CD4-positive, alpha-beta T cell (primary cell): ENCODE measurements at regions of chr3 and their contacts with region 1.

Region 1: GRCh38 chr3:50617096-50617791 is at the start of gene MAPKAPK3:
- DNase-seq: peak in 5 of 14 experiments; percentile 32 to 50 (median 43)
- ATAC-seq: peak; percentile 4
- H3K4me3 ChIP-seq: peak within 1 kb of the TSS; percentile 93
- H3K4me3 Mint-ChIP-seq: peak within 1 kb of the TSS; percentile 92
- H3K27ac ChIP-seq: peak within 1 kb of the TSS; percentile 73 to 79
- H3K27ac Mint-ChIP-seq: peak within 1 kb of the TSS; percentile 84
- H3K4me1 ChIP-seq: peaks cover 87% of the 10 kb centered on the region
- H3K4me1 Mint-ChIP-seq: peaks cover 64% of the 10 kb centered on the region
- H3K27me3 ChIP-seq: no peaks in the 10 kb centered on the region
- H3K27me3 Mint-ChIP-seq: no peaks in the 10 kb centered on the region
- CTCF ChIP-seq: no peak
- total RNA-seq, gene MAPKAPK3: 16.4 to 16.6 TPM

Region 2: GRCh38 chr3:49867400-49867799 is 749.8 kb before region 1 on chr3:
- CTCF ChIA-PET with region 1: no interaction called
- POLR2A ChIA-PET with region 1: no interaction called
- intact Hi-C with region 1: no loop called
- DNase-seq: no peak
- ATAC-seq: no peak
- H3K4me3 ChIP-seq: no peak overlapping the region
- H3K4me3 Mint-ChIP-seq: no peak overlapping the region
- H3K27ac ChIP-seq: no peak overlapping the region
- H3K27ac Mint-ChIP-seq: no peak overlapping the region
- H3K4me1 ChIP-seq: peaks cover 16% of the 10 kb centered on the region
- H3K4me1 Mint-ChIP-seq: no peaks in the 10 kb centered on the region
- H3K27me3 ChIP-seq: peaks cover 45 to 46% of the 10 kb centered on the region in 2 experiments
- H3K27me3 Mint-ChIP-seq: peaks cover 57% of the 10 kb centered on the region
- CTCF ChIP-seq: no peak

Region 3: DNA sequence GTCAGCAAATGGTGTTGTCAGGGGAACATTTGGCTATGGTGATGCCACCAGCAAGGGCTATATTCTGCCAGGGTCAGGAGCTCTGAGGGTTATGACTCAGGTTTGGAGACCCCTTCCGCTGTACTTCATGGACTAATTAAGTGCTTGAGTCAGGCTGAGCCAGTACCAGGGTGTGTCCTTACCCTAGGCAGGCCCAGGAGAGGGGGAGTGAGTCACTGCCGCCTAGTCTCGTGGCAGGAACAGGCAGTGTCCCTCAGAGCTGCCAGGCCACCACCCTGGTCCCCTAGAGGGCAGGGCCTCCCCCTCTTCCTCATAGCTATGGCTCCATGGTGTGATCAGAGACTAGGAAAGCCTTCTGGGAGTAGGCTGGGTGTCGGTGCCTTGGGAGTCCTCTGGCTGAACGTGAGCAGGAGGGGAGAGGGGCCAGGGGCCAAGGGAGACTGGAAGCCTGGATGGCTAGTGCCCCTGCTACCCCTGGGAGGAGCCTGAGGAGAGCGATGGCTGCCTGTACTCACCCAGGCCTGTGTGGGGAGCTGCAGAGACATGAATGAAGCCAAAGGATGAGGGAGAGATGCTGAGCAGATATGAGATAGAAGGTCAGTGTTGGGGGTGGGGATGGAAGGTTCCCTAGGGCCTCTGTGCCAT is 10.3 kb after region 1 on chr3:
- CTCF ChIA-PET with region 1: interaction called, 10 read pairs
- POLR2A ChIA-PET with region 1: interaction called, 10 read pairs
- intact Hi-C with region 1: no loop called
- DNase-seq: peak in 2 of 14 experiments; percentile 64 to 78
- ATAC-seq: peak; percentile 13
- H3K4me3 ChIP-seq: no peak overlapping the region
- H3K4me3 Mint-ChIP-seq: no peak overlapping the region
- H3K27ac ChIP-seq: no peak overlapping the region
- H3K27ac Mint-ChIP-seq: peak overlapping the region; percentile 70
- H3K4me1 ChIP-seq: peaks cover 99% of the 10 kb centered on the region
- H3K4me1 Mint-ChIP-seq: peaks cover 89% of the 10 kb centered on the region
- H3K27me3 ChIP-seq: no peaks in the 10 kb centered on the region
- H3K27me3 Mint-ChIP-seq: no peaks in the 10 kb centered on the region
- CTCF ChIP-seq: no peak

Region 4: DNA sequence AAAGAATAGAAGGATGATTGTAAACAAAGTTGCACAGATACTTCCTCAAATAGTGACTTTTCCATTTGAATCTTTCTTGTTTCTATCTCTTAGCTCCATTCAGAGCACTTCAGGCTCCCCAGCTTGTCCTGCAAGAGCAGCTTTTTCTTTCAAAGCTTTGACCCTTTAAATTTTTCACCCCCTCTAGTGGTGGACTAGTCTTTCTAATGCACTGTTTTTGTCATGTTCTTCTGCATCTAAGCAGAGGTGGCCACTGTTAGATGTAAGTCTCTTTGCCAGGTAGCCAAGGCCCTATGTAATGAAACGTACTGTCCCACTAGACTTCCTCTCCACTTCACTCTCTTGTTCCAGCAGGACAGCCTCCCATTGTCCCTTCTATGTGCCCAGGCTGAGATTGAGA is 693.8 kb after region 1 on chr3:
- CTCF ChIA-PET with region 1: interaction called, 8 read pairs
- POLR2A ChIA-PET with region 1: no interaction called
- intact Hi-C with region 1: loop called (anchors 2 kb)
- DNase-seq: peak in 4 of 14 experiments; percentile 3 to 53 (median 47)
- ATAC-seq: no peak
- H3K4me3 ChIP-seq: no peak overlapping the region
- H3K4me3 Mint-ChIP-seq: no peak overlapping the region
- H3K27ac ChIP-seq: no peak overlapping the region
- H3K27ac Mint-ChIP-seq: no peak overlapping the region
- H3K4me1 ChIP-seq: no peaks in the 10 kb centered on the region
- H3K4me1 Mint-ChIP-seq: no peaks in the 10 kb centered on the region
- H3K27me3 ChIP-seq: no peaks in the 10 kb centered on the region
- H3K27me3 Mint-ChIP-seq: peaks cover 5% of the 10 kb centered on the region
- CTCF ChIP-seq: peak; percentile 55

Region 5: DNA sequence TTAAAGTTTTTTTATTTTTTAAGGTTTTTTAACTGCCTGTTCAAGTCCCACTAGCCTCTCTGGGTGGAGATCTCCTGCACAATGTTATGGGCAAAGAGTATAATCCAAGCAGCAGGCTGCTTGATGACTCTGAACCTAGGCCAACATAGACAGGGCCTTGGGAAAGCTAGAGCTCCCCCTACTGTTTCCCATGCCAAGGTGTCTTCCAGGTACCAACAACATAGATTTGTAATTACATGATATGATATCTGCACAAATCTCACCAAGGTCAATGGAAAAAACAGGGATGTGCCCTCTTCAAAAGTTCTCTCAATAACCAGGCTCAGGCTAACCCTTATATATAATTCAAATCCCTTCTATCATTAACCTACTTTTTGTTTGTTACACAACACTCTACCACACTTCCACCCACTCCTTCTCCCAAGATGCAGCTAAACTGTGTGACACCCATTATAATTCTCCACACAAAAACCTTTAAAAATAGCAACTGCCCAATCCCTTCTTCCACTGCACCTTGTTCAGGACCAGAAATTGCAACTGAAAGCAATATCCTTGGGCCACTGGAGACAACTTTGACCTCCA is 817.6 kb after region 1 on chr3:
- CTCF ChIA-PET with region 1: interaction called, 11 read pairs
- POLR2A ChIA-PET with region 1: no interaction called
- intact Hi-C with region 1: loop called in 1 of 2 experiments (anchors 2 kb)
- DNase-seq: peak in 13 of 14 experiments; percentile 13 to 77 (median 30)
- ATAC-seq: peak; percentile 94
- H3K4me3 ChIP-seq: no peak overlapping the region
- H3K4me3 Mint-ChIP-seq: no peak overlapping the region
- H3K27ac ChIP-seq: no peak overlapping the region
- H3K27ac Mint-ChIP-seq: no peak overlapping the region
- H3K4me1 ChIP-seq: no peaks in the 10 kb centered on the region
- H3K4me1 Mint-ChIP-seq: peaks cover 8% of the 10 kb centered on the region
- H3K27me3 ChIP-seq: no peaks in the 10 kb centered on the region
- H3K27me3 Mint-ChIP-seq: no peaks in the 10 kb centered on the region
- CTCF ChIP-seq: peak; percentile 83